ENCODE measurements at regions of chr4 and their contacts with region 1.

Region 1: DNA sequence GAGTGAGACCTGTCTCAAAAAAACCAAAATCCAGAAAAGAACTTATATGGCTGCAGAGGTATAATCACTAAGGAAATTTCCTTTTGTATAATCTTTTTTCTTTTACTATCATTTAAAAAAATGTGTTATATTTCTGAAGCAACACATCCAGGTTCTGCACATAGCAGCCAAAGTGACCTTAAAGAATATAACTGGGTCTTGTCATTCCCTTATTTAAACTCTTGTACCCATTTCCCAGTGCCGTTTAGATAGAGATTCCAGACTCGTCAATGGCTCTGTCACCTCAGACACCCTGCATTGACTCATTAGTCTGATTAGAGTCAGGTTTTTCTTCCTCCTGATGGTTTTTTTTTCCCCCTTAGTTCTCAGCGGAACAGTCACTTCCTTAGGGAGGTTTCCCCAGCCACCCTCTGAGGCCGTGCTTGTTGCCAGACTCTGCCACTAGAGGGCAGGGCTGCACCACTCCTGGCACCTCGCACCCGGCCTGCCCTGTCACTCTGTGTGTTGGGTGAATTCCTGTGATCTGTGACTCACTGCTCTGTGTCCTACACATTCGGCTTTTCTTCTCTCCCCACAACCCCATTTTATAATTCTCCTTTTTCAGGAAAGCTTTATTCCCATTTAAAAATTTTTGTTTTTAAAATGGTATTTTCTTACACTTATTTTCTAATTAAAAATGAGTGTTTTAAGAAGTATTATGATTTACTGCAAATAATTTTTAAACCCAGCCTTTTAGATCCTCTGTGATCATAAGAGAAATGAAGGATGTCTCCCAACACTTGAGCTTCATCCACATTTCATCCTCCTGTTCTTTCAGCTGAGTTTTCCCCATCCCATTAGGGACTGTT is 32.1 kb downstream of the HTT start:
- DNase-seq: peak; percentile 98
- H3K4me3 Mint-ChIP-seq: no peak overlapping the region
- H3K27ac Mint-ChIP-seq: peak overlapping the region; percentile 34
- H3K4me1 Mint-ChIP-seq: peaks cover 17% of the 10 kb centered on the region
- H3K27me3 Mint-ChIP-seq: no peaks in the 10 kb centered on the region

Region 2: DNA sequence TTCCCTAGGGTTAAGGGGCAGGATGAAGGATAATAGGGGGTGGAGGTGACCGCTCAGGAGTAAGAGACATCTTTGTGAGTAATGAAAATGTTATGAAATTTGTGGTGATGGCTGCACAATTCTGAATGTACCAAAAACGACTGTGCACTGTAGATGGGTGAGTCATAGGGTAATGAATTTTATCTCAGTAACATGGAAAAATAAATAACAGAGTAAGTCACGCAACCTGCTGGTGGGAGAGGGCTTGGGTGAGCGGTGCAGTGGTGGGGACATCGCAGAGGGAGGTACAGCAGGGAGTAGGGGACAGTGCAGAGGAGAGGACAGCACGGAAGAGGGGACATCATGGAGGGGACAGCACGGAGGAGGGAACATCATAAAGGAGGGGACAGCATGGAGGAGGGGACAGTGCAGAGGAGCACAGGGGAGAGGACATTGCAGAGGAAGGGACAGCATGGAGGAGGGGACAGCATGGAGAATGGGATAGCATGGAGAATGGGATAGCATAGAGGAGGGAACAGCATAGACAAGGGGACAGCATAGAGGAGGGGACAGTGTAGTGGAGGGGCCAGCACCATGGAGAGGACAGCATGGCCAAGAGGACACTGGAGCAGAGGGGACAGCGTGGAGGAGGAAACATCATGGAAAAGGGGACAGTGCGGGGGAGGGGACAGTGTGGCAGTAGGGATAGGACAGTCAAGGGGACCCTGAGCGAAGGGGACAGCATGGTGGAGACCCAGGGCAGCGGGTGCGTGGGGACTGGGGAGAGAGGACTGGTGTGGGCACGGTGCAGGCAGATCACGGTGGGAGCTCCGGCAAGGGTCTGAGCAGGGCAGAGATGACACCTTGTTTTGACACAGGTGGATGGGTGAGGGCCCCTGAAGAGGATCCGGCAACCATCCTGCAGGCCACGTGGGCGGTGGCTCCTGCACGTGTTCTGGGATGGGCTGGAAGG is 776.2 kb before region 1 on chr4:
- CTCF ChIA-PET with region 1: no interaction called
- intact Hi-C with region 1: no loop called
- DNase-seq: no peak
- H3K4me3 Mint-ChIP-seq: no peak overlapping the region
- H3K27ac Mint-ChIP-seq: no peak overlapping the region
- H3K4me1 Mint-ChIP-seq: peaks cover 2% of the 10 kb centered on the region
- H3K27me3 Mint-ChIP-seq: no peaks in the 10 kb centered on the region

Region 3: GRCh38 chr4:3054169-3054759 is 52.3 kb before region 1 on chr4:
- CTCF ChIA-PET with region 1: no interaction called
- intact Hi-C with region 1: no loop called
- DNase-seq: no peak
- H3K4me3 Mint-ChIP-seq: no peak overlapping the region
- H3K27ac Mint-ChIP-seq: no peak overlapping the region
- H3K4me1 Mint-ChIP-seq: no peaks in the 10 kb centered on the region
- H3K27me3 Mint-ChIP-seq: no peaks in the 10 kb centered on the region

Region 4: DNA sequence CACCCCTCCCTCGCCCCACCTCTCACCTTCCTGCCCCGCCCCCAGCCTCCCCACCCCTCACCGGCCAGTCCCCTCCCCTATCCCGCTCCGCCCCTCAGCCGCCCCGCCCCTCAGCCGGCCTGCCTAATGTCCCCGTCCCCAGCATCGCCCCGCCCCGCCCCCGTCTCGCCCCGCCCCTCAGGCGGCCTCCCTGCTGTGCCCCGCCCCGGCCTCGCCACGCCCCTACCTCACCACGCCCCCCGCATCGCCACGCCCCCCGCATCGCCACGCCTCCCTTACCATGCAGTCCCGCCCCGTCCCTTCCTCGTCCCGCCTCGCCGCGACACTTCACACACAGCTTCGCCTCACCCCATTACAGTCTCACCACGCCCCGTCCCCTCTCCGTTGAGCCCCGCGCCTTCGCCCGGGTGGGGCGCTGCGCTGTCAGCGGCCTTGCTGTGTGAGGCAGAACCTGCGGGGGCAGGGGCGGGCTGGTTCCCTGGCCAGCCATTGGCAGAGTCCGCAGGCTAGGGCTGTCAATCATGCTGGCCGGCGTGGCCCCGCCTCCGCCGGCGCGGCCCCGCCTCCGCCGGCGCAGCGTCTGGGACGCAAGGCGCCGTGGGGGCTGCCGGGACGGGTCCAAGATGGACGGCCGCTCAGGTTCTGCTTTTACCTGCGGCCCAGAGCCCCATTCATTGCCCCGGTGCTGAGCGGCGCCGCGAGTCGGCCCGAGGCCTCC is 32.3 kb before region 1 on chr4 and contains the starts of genes HTT and HTT-AS:
- CTCF ChIA-PET with region 1: interaction called, 3 read pairs
- intact Hi-C with region 1: loop called (anchors 1 kb)
- DNase-seq: peak; percentile 99
- H3K4me3 Mint-ChIP-seq: peak within 1 kb of the TSS; percentile 83
- H3K27ac Mint-ChIP-seq: peak within 1 kb of the TSS; percentile 87
- H3K4me1 Mint-ChIP-seq: peaks cover 27% of the 10 kb centered on the region
- H3K27me3 Mint-ChIP-seq: no peaks in the 10 kb centered on the region
- total RNA-seq, gene HTT: 91.6 to 94.1 TPM
- total RNA-seq, gene HTT-AS: not detected

Region 5: GRCh38 chr4:3136453-3136852 is 29.9 kb after region 1 on chr4:
- CTCF ChIA-PET with region 1: interaction called, 8 read pairs
- intact Hi-C with region 1: loop called (anchors 1 kb)
- DNase-seq: no peak
- H3K4me3 Mint-ChIP-seq: no peak overlapping the region
- H3K27ac Mint-ChIP-seq: no peak overlapping the region
- H3K4me1 Mint-ChIP-seq: no peaks in the 10 kb centered on the region
- H3K27me3 Mint-ChIP-seq: no peaks in the 10 kb centered on the region

Region 6: DNA sequence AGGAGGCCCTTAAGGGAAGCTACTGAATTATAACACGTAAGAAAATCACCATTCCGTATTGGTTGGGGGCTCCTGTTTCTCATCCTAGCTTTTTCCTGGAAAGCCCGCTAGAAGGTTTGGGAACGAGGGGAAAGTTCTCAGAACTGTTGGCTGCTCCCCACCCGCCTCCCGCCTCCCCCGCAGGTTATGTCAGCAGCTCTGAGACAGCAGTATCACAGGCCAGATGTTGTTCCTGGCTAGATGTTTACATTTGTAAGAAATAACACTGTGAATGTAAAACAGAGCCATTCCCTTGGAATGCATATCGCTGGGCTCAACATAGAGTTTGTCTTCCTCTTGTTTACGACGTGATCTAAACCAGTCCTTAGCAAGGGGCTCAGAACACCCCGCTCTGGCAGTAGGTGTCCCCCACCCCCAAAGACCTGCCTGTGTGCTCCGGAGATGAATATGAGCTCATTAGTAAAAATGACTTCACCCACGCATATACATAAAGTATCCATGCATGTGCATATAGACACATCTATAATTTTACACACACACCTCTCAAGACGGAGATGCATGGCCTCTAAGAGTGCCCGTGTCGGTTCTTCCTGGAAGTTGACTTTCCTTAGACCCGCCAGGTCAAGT is 135.4 kb after region 1 on chr4:
- CTCF ChIA-PET with region 1: no interaction called
- intact Hi-C with region 1: loop called (anchors 5 kb)
- DNase-seq: no peak
- H3K4me3 Mint-ChIP-seq: no peak overlapping the region
- H3K27ac Mint-ChIP-seq: no peak overlapping the region
- H3K4me1 Mint-ChIP-seq: peaks cover 12% of the 10 kb centered on the region
- H3K27me3 Mint-ChIP-seq: no peaks in the 10 kb centered on the region

Region 7: DNA sequence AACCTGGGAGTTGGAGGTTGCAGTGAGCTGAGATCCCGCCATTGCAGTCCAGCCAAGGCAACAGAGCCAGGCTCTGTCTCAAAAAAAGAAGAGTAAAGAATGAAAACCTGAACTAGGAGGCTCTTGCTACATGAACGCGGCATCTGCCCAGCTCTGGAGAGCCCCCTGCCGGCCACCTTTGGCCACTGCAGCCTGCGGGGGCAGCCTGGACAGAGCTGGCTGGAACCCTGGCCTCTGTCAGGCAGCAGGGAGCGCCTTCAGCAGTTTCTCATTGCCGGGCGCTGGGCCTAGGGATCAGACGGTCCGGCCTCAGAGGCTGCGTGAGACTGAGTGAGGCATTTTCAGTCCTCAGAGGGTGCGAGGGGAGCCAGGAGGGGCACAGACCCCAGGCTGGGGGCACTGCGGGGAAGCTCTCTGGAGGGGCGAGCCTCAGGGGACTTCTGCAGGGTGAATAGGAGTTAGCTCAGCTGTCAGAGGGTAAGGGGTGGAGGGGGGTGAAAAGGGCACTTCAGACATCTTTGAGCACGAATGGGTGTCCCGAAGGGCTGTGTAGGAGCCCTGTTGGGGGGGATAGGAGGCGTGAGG is 374.1 kb after region 1 on chr4:
- CTCF ChIA-PET with region 1: interaction called, 3 read pairs
- intact Hi-C with region 1: loop called (anchors 1 kb)
- DNase-seq: peak; percentile 83
- H3K4me3 Mint-ChIP-seq: no peak overlapping the region
- H3K27ac Mint-ChIP-seq: no peak overlapping the region
- H3K4me1 Mint-ChIP-seq: no peaks in the 10 kb centered on the region
- H3K27me3 Mint-ChIP-seq: peaks cover 20% of the 10 kb centered on the region